ENCODE measurements at regions of chr2 and their contacts with region 1.

Region 1: GRCh38 chr2:117980783-117981676 is 32.8 kb downstream of the CCDC93 start:
- DNase-seq: no peak
- CTCF ChIP-seq: no peak

Region 2: DNA sequence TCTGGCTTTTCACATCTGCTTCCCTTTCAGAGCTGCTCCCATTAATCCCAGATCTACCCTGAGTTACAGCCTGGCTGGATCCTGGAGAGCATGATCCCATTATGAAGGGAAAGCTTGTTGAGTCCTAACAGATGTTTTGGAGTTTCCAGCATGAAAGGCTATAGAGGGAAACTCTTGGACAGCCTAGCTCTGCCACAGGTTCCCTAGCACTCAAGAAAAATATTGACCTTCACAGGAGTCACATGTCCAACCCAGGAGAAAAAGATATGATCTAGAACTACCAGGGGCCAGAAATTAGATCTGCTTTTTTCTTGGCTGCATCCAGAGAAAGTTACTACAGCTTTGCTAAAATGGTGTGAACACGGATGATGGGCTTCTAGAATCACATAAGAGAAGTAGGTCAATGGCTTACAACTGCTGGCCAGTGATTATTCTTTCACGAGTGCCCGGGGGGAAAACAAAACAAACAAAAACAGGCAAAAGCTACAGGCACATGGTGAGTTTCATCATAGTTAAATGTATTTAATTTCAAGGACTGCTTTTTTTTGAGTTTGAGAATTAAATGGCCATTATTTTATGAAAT is 16.9 kb after region 1 on chr2:
- CTCF ChIA-PET with region 1: interaction called, 151 read pairs
- POLR2A ChIA-PET with region 1: no interaction called
- DNase-seq: no peak
- CTCF ChIP-seq: no peak